Activated B cell treated with CpG ODN at 0.5 μM for 24 hours (primary cell): ENCODE measurements at regions of chr3 and their contacts with region 1.

Region 1: GRCh38 chr3:50568947-50569749 is at the start of gene HEMK1:
- DNase-seq: peak; percentile 90
- ATAC-seq: peak; percentile 74
- H3K4me3 Mint-ChIP-seq: peak within 1 kb of the TSS; percentile 97
- H3K27ac Mint-ChIP-seq: peak within 1 kb of the TSS; percentile 93
- H3K4me1 Mint-ChIP-seq: peaks cover 34% of the 10 kb centered on the region
- H3K27me3 Mint-ChIP-seq: no peaks in the 10 kb centered on the region
- CTCF ChIP-seq: no peak
- total RNA-seq, gene HEMK1: 23.5 and 26.9 TPM in 2 replicates

Region 2: GRCh38 chr3:50337191-50337841 is 231.8 kb before region 1 on chr3:
- CTCF ChIA-PET with region 1: no interaction called
- POLR2A ChIA-PET with region 1: interaction called, 12 read pairs
- intact Hi-C with region 1: no loop called
- DNase-seq: peak; percentile 90
- ATAC-seq: peak; percentile 83
- H3K4me3 Mint-ChIP-seq: peak overlapping the region; percentile 95
- H3K27ac Mint-ChIP-seq: peak overlapping the region; percentile 98
- H3K4me1 Mint-ChIP-seq: peaks cover 66% of the 10 kb centered on the region
- H3K27me3 Mint-ChIP-seq: no peaks in the 10 kb centered on the region
- CTCF ChIP-seq: no peak

Region 3: GRCh38 chr3:50358911-50359759 is 210.0 kb before region 1 on chr3 and contains the start of gene TMEM115:
- CTCF ChIA-PET with region 1: no interaction called
- POLR2A ChIA-PET with region 1: no interaction called
- intact Hi-C with region 1: loop called (anchors 2 kb)
- DNase-seq: peak; percentile 88
- ATAC-seq: peak; percentile 100
- H3K4me3 Mint-ChIP-seq: peak within 1 kb of the TSS; percentile 96
- H3K27ac Mint-ChIP-seq: peak within 1 kb of the TSS; percentile 89
- H3K4me1 Mint-ChIP-seq: peaks cover 49% of the 10 kb centered on the region
- H3K27me3 Mint-ChIP-seq: no peaks in the 10 kb centered on the region
- CTCF ChIP-seq: no peak
- total RNA-seq, gene TMEM115: 18.7 and 19.6 TPM in 2 replicates

Region 4: GRCh38 chr3:50600841-50601591 is 31.9 kb after region 1 on chr3:
- CTCF ChIA-PET with region 1: interaction called, 3 read pairs
- POLR2A ChIA-PET with region 1: interaction called, 10 read pairs
- intact Hi-C with region 1: no loop called
- DNase-seq: no peak
- ATAC-seq: peak; percentile 61
- H3K4me3 Mint-ChIP-seq: peak overlapping the region; percentile 41
- H3K27ac Mint-ChIP-seq: peak overlapping the region; percentile 41
- H3K4me1 Mint-ChIP-seq: peaks cover 40% of the 10 kb centered on the region
- H3K27me3 Mint-ChIP-seq: no peaks in the 10 kb centered on the region
- CTCF ChIP-seq: no peak

Region 5: DNA sequence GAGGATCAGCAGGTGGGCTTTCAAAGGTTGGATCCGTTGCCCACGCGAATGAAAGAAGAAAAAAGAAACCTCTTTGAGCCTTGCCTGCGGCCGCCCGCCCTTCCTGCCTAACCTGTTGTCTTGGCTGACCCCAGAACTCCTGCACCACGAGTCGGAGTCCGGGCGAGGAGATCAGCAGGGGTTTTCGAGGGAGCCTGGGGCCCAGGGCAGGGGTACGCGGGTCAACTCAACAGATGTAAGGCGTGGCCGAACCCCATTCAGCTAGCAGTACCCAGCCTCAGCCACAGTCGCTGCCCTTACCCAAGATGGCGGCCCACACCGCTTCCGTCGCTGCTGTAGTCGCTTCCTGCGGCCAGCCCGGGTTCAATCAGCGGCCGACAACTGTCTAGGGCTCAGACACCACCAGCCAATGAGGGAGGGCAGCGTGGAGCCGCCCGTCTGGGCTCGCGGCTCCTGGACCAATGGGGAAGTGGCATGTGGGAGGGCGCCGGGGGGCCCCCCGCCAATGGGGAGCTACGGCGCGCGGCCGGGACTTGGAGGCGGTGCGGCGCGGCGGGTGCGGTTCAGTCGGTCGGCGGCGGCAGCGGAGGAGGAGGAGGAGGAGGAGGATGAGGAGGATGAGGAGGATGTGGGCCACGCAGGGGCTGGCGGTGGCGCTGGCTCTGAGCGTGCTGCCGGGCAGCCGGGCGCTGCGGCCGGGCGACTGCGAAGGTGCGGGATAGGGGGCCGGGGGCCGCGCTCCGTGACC is 815.8 kb after region 1 on chr3 and contains the start of gene MANF:
- CTCF ChIA-PET with region 1: no interaction called
- POLR2A ChIA-PET with region 1: interaction called, 25 read pairs
- intact Hi-C with region 1: loop called (anchors 1 kb)
- DNase-seq: peak; percentile 89
- ATAC-seq: peak; percentile 95
- H3K4me3 Mint-ChIP-seq: peak within 1 kb of the TSS; percentile 99
- H3K27ac Mint-ChIP-seq: peak within 1 kb of the TSS; percentile 98
- H3K4me1 Mint-ChIP-seq: peaks cover 49% of the 10 kb centered on the region
- H3K27me3 Mint-ChIP-seq: no peaks in the 10 kb centered on the region
- CTCF ChIP-seq: no peak
- total RNA-seq, gene MANF: 64.2 and 66.1 TPM in 2 replicates

Region 6: DNA sequence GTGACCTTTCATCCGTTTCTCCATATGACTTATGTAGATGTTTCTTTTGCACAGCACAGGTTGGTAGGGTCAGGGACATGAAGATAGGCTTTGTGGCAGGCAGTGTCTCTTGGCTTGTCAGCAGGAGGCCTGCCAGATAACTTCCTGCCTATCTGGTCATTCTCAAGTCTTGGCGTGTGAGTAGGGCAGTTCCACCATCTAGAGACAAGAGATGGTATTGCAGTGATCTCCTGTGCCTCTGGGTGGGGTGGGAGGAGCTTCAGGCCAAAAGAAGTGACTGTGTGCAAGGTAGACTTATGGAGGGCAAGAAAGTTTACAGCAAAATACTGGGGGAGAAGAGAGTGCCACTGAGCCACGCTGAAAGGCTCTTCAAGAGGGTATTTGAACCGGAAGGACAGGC is 1112.9 kb after region 1 on chr3:
- CTCF ChIA-PET with region 1: no interaction called
- POLR2A ChIA-PET with region 1: no interaction called
- intact Hi-C with region 1: loop called (anchors 2 kb)
- DNase-seq: peak; percentile 40
- ATAC-seq: peak; percentile 87
- H3K4me3 Mint-ChIP-seq: peak overlapping the region; percentile 12
- H3K27ac Mint-ChIP-seq: peak overlapping the region; percentile 73
- H3K4me1 Mint-ChIP-seq: peaks cover 82% of the 10 kb centered on the region
- H3K27me3 Mint-ChIP-seq: no peaks in the 10 kb centered on the region
- CTCF ChIP-seq: no peak